Dorsolateral prefrontal cortex (tissue), 120 donors: ENCODE measurements at regions of chr1 and their contacts with region 1.

Region 1: GRCh38 chr1:39132505-39133339 is 71.8 kb upstream of the MACF1 start:
- DNase-seq: peak in 7 of 10 donors; percentile 27 to 51 (median 47)
- H3K4me3 ChIP-seq: peak overlapping the region in 6 of 59 donors; percentile 2 to 24 (median 8)
- H3K27ac ChIP-seq: peak overlapping the region in 55 of 59 donors; percentile 2 to 86 (median 69)
- H3K27me3 ChIP-seq: no peaks in the 10 kb centered on the region
- CTCF ChIP-seq: peak in 37 of 56 donors; percentile 14 to 46 (median 33)

Region 2: DNA sequence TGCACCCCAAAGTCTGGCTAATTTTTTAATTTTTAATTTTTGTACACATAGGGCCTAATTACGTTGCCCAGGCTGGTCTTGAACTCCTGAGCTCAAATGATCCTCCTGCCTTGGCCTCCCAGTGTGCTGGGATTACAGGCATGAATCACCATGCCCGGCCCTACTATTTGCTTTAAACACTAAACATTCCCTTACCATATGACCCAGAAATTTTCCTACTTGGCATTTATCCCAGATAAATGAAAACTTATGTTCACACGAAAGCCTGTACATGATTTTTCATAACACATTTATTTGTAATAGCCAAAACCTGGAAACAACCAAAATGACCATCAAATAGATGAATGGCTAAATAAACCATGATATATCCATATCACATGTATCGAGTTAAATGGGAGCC is 70.8 kb before region 1 on chr1:
- intact Hi-C with region 1: no loop called
- DNase-seq: no peak
- H3K4me3 ChIP-seq: no peak overlapping the region
- H3K27ac ChIP-seq: no peak overlapping the region
- H3K27me3 ChIP-seq: no peaks in the 10 kb centered on the region
- CTCF ChIP-seq: no peak

Region 3: DNA sequence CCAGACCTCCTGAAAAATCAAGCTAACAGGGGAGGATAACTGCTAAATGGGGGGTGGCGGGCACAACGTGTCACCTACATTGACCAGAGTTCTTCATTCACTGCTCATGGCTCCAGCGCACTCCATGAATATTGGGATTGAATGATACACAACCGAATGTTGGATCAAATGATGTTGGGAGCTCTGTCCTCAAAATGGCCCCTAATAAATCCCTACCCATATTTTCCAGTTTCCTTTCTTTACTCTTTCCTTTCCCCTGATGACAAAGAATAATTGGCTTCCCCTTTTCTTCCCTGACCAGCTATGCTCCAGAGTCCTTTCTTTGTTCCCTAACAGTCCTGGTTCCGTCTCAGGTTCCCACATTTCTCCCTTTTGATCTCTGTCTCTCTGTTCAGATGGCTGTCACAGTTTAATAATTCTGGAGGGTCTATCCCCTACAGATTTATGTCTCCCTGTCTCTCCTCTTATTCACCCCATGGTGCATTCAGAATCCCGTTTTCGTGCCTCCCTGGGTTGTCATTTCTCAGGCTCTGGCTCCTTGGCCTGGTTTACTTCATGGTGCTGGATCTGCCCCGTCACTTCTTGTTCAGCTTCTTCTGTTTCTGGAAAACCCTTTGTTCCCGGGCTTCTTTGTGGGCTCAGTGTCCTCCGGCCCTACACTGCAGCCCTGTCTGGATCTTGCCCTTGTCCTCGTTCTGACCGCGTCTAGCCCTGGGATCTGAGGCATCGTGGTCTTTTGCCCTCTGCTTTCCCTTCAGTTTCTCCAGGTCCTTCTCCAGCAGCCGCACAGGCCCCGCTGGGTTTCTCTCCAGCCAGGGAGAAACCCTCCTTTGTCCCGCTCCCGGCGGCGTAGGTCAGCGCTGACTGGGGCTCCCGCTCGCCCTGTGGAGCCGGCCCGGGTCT is 28.3 kb before region 1 on chr1:
- intact Hi-C with region 1: loop called in 1 of 2 experiments (anchors 1 kb)
- DNase-seq: peak in 3 of 10 donors; percentile 9 to 52 (median 45)
- H3K4me3 ChIP-seq: peak overlapping the region; percentile 47 to 95 (median 80)
- H3K27ac ChIP-seq: peak overlapping the region; percentile 62 to 98 (median 94)
- H3K27me3 ChIP-seq: no peaks in the 10 kb centered on the region
- CTCF ChIP-seq: no peak